H1 (cell line): ENCODE measurements at regions of chr4 and their contacts with region 1.

Region 1: GRCh38 chr4:151644622-151645021 is 116.2 kb downstream of the GATB start:
- DNase-seq: peak in 1 of 2 experiments; percentile 65
- H3K4me3 ChIP-seq: no peak overlapping the region
- H3K27ac ChIP-seq: no peak overlapping the region
- H3K4me1 ChIP-seq: peaks cover 0 to 12% (median 2%) of the 10 kb centered on the region in 4 experiments; a peak in 3 of 7 replicates
- H3K27me3 ChIP-seq: no peaks in the 10 kb centered on the region
- CTCF ChIP-seq: peak; percentile 70 to 83 (median 78)
- EP300 ChIP-seq: no peak
- POLR2A ChIP-seq: no peak
- RAD21 ChIP-seq: peak; percentile 79 to 84

Region 2: DNA sequence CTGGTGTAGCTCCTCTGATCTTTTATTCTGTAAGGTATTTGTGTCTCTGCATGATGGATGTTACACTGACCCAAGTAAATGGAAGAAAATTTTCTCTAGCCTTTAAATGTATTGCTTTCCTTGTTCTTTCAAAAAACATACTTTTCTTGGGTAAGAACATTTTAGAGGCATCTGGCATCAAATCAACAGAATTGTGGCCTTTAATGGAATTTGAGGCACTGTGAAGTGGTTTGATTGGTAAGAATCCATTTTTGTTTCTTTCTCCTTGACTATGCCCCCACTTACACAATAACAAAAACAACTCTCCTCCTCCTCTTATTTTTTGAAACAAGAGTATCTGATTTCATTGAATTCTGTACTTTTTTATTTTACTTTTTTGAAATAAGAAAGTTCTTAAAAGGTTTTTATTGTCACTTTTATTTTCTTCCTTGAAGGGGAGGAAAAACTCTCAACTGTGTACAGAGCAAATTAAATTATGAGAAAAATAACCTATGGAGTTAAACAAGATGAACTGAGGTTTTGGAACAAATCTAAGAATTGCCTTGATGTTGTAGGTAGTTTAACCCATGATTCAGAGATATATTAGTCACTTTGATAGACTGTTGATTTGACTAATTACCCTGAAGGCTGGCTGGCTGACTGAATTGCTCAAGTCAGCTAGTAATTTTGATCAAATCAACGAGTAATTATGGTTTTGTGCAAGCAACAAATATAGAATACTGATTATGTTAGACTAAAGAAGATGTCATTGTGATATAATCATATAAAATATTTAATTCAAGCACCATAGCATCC is 89.3 kb before region 1 on chr4:
- CTCF ChIA-PET with region 1: no interaction called
- POLR2A ChIA-PET with region 1: no interaction called
- DNase-seq: no peak
- H3K4me3 ChIP-seq: no peak overlapping the region
- H3K27ac ChIP-seq: no peak overlapping the region
- H3K4me1 ChIP-seq: peaks cover under 1 to 12% (median 7%) of the 10 kb centered on the region in 4 experiments; a peak in 6 of 7 replicates
- H3K27me3 ChIP-seq: no peaks in the 10 kb centered on the region
- CTCF ChIP-seq: no peak
- EP300 ChIP-seq: no peak
- POLR2A ChIP-seq: no peak
- RAD21 ChIP-seq: no peak

Region 3: DNA sequence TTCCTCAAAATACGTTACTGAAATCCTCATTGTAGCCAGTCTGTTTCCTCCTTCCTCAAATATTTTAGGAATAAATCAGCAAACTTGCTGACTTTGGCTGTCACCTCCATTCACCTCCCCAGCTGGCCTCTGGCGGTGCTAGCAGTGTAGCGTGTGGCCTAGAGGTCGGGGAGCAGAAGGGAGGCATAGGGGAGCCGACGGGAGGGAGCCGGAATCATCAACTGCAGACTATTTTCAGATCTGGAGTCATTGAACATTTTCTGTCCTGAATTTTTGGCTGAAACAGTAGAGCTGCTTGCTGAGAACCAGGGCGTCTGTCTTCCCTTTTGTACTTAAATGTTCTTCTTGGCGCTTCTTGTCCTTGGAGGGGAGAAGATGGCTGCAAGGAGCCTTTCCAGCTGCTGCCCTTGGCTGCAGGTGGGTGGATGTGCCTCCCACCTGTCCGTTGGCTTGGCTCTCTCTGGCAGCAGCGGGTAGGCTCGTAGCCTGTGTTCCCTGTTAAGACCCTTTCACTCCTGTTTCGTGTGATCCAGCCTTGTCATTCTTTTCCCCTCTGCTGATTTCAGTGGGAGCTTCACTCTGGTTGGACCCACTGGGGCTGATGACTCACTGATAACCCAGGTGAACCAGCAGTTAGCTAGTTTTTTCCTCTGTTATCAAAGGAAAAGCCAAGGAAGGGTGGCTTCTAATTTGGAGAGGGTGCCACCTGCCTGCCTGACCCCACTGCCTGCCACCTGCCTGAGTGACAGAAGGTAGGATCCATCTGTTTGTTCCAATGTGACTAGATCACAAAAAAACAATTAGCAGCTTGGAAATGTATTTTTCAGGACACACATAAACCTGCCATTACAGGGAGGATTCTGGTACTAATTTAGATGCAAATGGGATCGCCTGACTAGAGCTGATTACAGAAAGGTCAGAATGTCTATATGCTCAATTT is 19.7 kb before region 1 on chr4:
- CTCF ChIA-PET with region 1: interaction called, 32 read pairs
- POLR2A ChIA-PET with region 1: interaction called, 3 read pairs
- DNase-seq: no peak
- H3K4me3 ChIP-seq: no peak overlapping the region
- H3K27ac ChIP-seq: no peak overlapping the region
- H3K4me1 ChIP-seq: peaks cover 0 to 16% (median 7%) of the 10 kb centered on the region in 4 experiments; a peak in 4 of 7 replicates
- H3K27me3 ChIP-seq: no peaks in the 10 kb centered on the region
- CTCF ChIP-seq: no peak
- EP300 ChIP-seq: no peak
- POLR2A ChIP-seq: no peak
- RAD21 ChIP-seq: no peak

Region 4: GRCh38 chr4:151658959-151659600 is 14.5 kb after region 1 on chr4:
- CTCF ChIA-PET with region 1: interaction called, 33 read pairs
- POLR2A ChIA-PET with region 1: interaction called, 3 read pairs
- DNase-seq: no peak
- H3K4me3 ChIP-seq: no peak overlapping the region
- H3K27ac ChIP-seq: no peak overlapping the region
- H3K4me1 ChIP-seq: no peaks in the 10 kb centered on the region
- H3K27me3 ChIP-seq: no peaks in the 10 kb centered on the region
- CTCF ChIP-seq: no peak
- EP300 ChIP-seq: no peak
- POLR2A ChIP-seq: no peak
- RAD21 ChIP-seq: no peak

Region 5: GRCh38 chr4:151760712-151761527 is 116.3 kb after region 1 on chr4 and contains the start of gene GATB:
- CTCF ChIA-PET with region 1: no interaction called
- POLR2A ChIA-PET with region 1: no interaction called
- DNase-seq: peak; percentile 93 to 94
- H3K4me3 ChIP-seq: peak within 1 kb of the TSS; percentile 83 to 98 (median 95)
- H3K27ac ChIP-seq: peak within 1 kb of the TSS; percentile 70; the same call in 1 of the 2 replicates
- H3K4me1 ChIP-seq: peaks cover 0 to 3% (median 3%) of the 10 kb centered on the region in 4 experiments; a peak in 3 of 7 replicates
- H3K27me3 ChIP-seq: no peaks in the 10 kb centered on the region
- CTCF ChIP-seq: peak; percentile 46 to 59 (median 48)
- EP300 ChIP-seq: no peak
- POLR2A ChIP-seq: peak; percentile 93 to 94
- RAD21 ChIP-seq: peak; percentile 45 to 53
- total RNA-seq, gene GATB: 18.0 TPM in 2 replicates